Vagina (tissue), 2 donors: ENCODE measurements at regions of chr12 and their contacts with region 1.

Region 1: DNA sequence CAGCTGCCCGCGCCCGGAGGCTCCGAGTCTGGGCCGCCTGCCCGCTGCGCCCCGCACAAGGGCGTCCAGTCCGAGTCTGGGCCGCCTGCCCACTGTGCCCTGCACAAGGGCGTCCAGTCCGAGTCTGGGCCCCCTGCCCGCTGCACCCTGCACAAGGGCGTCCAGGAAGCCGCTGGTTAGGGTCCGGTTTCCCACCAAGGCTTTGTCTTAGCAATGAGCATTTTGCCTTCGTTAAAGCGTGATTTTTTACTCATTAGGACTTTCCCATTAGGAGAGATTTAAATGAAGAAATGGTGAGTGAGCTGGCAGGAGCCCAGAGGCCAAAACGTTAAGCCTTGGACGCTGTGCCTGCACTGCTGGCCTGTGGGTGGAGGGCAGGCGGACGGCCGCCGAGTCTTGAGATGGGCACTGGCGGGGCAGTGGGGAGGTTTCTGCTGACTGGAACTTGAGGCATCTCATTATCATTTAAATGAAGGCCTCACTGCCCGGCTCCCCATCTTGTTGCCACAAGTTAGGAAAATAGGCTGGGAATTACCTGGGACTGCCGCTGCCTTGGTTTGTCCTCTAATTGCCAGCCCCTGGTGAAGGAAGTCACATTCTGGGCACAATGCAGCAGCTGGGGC is 36.0 kb downstream of the FBRSL1 start:
- DNase-seq: no peak
- H3K4me3 ChIP-seq: no peak overlapping the region
- H3K27ac ChIP-seq: no peak overlapping the region
- H3K4me1 ChIP-seq: peaks cover 29% of the 10 kb centered on the region
- H3K27me3 ChIP-seq: no peaks in the 10 kb centered on the region
- CTCF ChIP-seq: no peak
- POLR2A ChIP-seq: no peak

Region 2: DNA sequence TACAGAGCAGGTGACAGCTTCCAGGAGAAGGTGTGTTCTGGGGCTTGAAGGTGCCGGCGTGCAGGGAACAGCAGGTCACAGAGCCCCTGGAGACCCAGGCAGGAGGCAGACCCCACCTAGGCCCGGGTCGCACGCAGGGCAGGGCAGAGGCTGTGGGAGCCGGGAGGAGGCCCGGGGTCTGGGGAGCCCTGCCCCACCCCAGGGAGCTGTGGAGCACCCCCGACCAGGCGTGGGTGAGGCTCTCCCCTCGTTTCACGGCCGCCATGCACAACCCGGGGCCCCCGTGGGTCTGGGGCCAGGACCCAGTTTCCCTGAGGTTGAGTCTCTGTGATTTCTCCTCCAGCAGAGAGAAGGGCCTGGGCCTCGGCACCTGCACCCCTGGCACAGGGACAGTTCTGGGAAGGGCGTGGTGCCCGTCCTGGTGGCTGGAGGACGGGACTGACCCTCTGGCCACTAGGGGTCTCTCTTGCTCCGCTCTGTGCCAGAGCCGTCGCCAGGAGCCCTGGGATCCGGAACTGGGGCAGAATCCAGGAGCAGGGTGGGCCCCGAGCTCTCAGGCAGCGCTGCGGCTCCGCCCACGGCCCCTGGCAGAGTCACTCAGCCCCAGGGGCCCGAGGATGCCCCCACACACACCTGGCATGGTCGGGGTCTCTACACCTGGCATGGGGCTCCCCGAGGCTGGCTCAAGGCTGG is 111.2 kb before region 1 on chr12:
- intact Hi-C with region 1: loop called (anchors 5 kb)
- DNase-seq: no peak
- H3K4me3 ChIP-seq: no peak overlapping the region
- H3K27ac ChIP-seq: no peak overlapping the region
- H3K4me1 ChIP-seq: peaks cover 9% of the 10 kb centered on the region
- H3K27me3 ChIP-seq: no peaks in the 10 kb centered on the region
- CTCF ChIP-seq: peak; percentile 68 to 82 (median 72)
- POLR2A ChIP-seq: no peak

Region 3: DNA sequence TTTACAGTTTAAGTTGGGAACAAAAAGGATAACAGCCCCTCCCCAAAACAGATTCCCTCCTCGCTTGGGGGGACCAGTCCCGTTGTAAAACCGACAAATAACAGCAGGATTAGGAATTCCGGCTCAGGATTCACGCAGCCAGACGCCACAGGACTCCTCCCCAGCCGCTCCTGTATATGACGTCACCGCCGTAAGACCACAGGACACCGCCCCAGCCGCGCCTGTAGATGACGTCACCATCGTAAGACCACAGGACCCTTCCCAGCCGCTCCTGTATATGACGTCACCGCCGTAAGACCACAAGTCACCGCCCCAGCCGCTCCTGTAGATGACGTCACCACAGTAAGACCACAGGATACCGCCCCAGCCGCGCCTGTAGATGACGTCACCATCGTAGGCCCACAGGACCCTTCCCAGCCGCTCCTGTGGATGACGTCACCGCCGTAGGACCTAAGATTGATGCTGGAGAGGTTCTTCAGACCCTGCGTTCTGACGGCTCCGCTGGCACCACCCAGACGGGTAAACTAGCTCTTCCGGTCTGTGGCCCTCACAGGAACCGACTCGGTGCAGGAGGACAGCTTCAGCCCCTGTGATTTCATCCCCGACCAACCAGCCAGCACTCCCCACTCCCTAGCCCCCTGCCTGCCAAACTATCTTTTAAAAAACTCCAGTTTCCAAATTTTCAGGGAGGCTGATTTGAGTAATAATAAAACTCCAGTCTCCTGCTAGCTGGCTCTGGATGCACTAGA is 79.9 kb before region 1 on chr12:
- intact Hi-C with region 1: no loop called
- DNase-seq: no peak
- H3K4me3 ChIP-seq: peak overlapping the region; percentile 23 to 45
- H3K27ac ChIP-seq: peak overlapping the region; percentile 68
- H3K4me1 ChIP-seq: peaks cover 15% of the 10 kb centered on the region
- H3K27me3 ChIP-seq: no peaks in the 10 kb centered on the region
- CTCF ChIP-seq: no peak
- POLR2A ChIP-seq: no peak